CD4-positive, alpha-beta memory T cell (primary cell): ENCODE measurements at regions of chr9 and their contacts with region 1.

Region 1: GRCh38 chr9:36190388-36191287 is at the start of gene CLTA:
- DNase-seq: peak; percentile 93 to 98 (median 95)
- H3K4me3 ChIP-seq: peak within 1 kb of the TSS; percentile 87 to 94
- H3K4me3 Mint-ChIP-seq: peak within 1 kb of the TSS; percentile 90 to 98 (median 94)
- H3K27ac ChIP-seq: peak within 1 kb of the TSS; percentile 91
- H3K27ac Mint-ChIP-seq: peak within 1 kb of the TSS; percentile 92 to 96 (median 96)
- H3K4me1 ChIP-seq: peaks cover 42% of the 10 kb centered on the region
- H3K4me1 Mint-ChIP-seq: peaks cover 36 to 57% (median 44%) of the 10 kb centered on the region in 4 donors
- H3K27me3 ChIP-seq: no peaks in the 10 kb centered on the region
- H3K27me3 Mint-ChIP-seq: peaks cover 0 to 1% of the 10 kb centered on the region in 2 donors
- total RNA-seq, gene CLTA: 69.9 to 72.3 TPM

Region 2: DNA sequence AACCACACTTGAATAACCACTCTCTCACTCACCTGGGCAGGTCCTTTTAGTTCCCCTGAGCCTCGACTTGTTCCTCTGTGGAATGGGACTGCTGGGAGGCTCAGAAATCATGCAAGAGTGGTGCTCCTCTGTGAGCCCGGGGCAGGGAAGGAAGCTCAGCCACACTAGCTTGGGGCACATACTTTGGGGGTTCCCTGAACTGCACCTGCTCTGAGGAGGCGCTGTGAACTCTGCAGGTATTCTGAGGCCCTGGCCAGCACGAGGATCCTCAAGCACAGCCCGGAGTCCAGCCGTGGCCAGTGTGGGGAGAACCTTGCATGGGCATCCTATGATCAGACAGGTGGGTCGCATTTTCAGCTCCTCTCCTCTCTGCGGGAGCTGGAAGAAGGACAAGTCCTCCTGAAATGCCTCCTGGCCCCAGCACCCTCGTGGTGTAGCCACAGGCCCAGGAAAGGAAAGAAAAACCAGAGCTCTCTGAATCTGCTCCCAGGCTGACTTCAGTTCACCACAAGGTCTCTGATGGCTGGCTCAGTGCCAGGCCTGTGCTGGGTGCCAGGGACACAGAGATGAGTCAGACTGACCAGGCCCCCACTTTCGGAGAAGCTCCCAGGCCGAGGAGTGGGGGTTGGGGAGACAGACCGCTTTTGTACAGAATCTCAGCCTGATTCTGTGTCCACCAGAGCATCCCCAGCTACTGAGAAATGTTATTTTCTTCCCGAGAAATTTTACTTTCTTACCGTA is 42.2 kb before region 1 on chr9:
- CTCF ChIA-PET with region 1: interaction called, 9 read pairs
- POLR2A ChIA-PET with region 1: interaction called, 16 read pairs
- intact Hi-C with region 1: loop called (anchors 1 kb)
- DNase-seq: peak; percentile 56 to 88 (median 61)
- H3K4me3 ChIP-seq: no peak overlapping the region
- H3K4me3 Mint-ChIP-seq: peak overlapping the region in 7 of 8 donors; percentile 17 to 77 (median 42)
- H3K27ac ChIP-seq: peak overlapping the region; percentile 73
- H3K27ac Mint-ChIP-seq: peak overlapping the region; percentile 61 to 95 (median 92)
- H3K4me1 ChIP-seq: peaks cover 100% of the 10 kb centered on the region
- H3K4me1 Mint-ChIP-seq: peaks cover 68 to 99% (median 83%) of the 10 kb centered on the region in 4 donors
- H3K27me3 ChIP-seq: no peaks in the 10 kb centered on the region
- H3K27me3 Mint-ChIP-seq: no peaks in the 10 kb centered on the region

Region 3: GRCh38 chr9:36237230-36237629 is 46.6 kb after region 1 on chr9:
- CTCF ChIA-PET with region 1: interaction called, 12 read pairs
- POLR2A ChIA-PET with region 1: no interaction called
- intact Hi-C with region 1: no loop called
- DNase-seq: no peak
- H3K4me3 ChIP-seq: no peak overlapping the region
- H3K4me3 Mint-ChIP-seq: no peak overlapping the region
- H3K27ac ChIP-seq: no peak overlapping the region
- H3K27ac Mint-ChIP-seq: peak overlapping the region in 1 of 7 donors; percentile 13
- H3K4me1 ChIP-seq: no peaks in the 10 kb centered on the region
- H3K4me1 Mint-ChIP-seq: peaks cover 0 to 7% (median 1%) of the 10 kb centered on the region in 4 donors
- H3K27me3 ChIP-seq: no peaks in the 10 kb centered on the region
- H3K27me3 Mint-ChIP-seq: no peaks in the 10 kb centered on the region

Region 4: DNA sequence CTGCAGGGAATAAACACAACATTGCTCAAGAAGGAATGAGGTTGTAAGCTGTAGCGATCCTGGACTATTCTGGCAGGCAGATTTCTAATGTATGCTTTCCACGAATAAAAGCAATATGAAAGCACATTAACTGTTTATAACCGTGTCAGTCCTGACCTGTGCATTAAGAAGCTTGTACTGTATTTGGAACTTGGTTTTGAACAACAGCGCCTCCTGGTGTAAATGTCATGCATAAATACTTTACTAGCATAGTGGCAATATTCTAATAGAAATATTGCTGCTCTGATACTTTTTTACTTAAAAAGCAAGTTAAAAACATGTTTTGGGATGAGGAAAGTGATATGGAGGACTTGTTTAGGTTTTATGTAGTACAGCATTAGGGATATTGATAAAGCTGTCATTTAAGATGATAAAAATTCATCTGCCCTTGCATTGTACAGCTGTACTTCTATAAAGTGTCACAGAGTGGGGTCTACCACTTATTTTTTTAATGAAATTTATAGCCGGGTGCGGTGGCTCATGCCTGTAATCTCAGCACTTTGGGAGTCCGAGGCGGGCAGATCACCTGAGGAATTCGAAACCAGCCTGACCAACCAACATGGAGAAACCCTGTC is 138.3 kb after region 1 on chr9:
- CTCF ChIA-PET with region 1: interaction called, 70 read pairs
- POLR2A ChIA-PET with region 1: interaction called, 13 read pairs
- intact Hi-C with region 1: loop called (anchors 1 kb)
- DNase-seq: peak; percentile 46 to 64 (median 60)
- H3K4me3 ChIP-seq: no peak overlapping the region
- H3K4me3 Mint-ChIP-seq: peak overlapping the region in 2 of 8 donors; percentile 29 to 48
- H3K27ac ChIP-seq: no peak overlapping the region
- H3K27ac Mint-ChIP-seq: no peak overlapping the region
- H3K4me1 ChIP-seq: no peaks in the 10 kb centered on the region
- H3K4me1 Mint-ChIP-seq: peaks cover 0 to 4% (median 3%) of the 10 kb centered on the region in 4 donors
- H3K27me3 ChIP-seq: no peaks in the 10 kb centered on the region
- H3K27me3 Mint-ChIP-seq: no peaks in the 10 kb centered on the region